Common myeloid progenitor, CD34-positive (primary cell): ENCODE measurements at regions of chr16 and their contacts with region 1.

Region 1: GRCh38 chr16:81696961-81697615 is 82.0 kb upstream of the PLCG2 start:
- DNase-seq: peak; percentile 61 to 73 (median 68)
- H3K4me3 ChIP-seq: no peak overlapping the region
- H3K27ac ChIP-seq: no peak overlapping the region
- H3K4me1 ChIP-seq: peaks cover 0 to 28% (median 10%) of the 10 kb centered on the region in 4 experiments
- H3K27me3 ChIP-seq: no peaks in the 10 kb centered on the region

Region 2: GRCh38 chr16:81632392-81633146 is 64.5 kb before region 1 on chr16:
- CTCF ChIA-PET with region 1: interaction called, 19 read pairs
- POLR2A ChIA-PET with region 1: no interaction called
- DNase-seq: peak; percentile 98 to 99 (median 99)
- H3K4me3 ChIP-seq: peak overlapping the region in 3 of 7 experiments; percentile 12 to 49 (median 29)
- H3K27ac ChIP-seq: peak overlapping the region; percentile 96 to 98
- H3K4me1 ChIP-seq: peaks cover 23 to 74% (median 71%) of the 10 kb centered on the region in 4 experiments
- H3K27me3 ChIP-seq: no peaks in the 10 kb centered on the region

Region 3: DNA sequence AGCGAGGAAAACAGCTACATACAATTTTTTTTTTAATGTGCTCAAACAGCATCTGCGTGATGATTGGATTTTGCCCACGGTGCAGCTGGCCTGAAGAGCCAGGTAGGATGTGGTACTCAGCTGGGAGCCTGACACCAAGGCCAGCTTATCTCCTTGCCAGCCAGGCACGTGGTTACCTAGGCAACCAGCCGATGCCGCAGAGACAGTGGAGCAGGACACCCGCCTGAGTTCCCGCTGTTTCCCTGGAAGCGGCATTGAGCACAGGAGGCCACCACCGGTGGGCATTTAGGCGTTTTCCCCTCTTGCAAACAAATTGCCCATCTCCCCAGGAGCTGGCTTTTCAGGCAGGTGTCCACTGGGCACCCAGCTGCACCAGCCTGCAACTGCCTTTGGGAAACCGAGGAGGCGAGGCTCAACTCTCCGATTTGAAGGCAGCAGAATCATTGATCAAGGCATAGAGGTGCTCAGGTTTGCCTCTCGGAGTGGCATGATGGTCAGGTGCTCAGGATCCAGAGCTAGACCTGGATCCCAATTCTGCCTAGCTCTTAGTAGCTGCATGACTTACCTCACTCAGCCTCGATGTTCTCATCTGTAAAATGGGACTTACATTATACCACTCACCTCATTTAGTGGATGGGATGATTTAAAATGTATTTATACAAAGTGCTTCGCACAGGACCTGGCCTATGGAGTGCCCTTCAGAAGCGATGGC is 55.5 kb before region 1 on chr16:
- CTCF ChIA-PET with region 1: interaction called, 13 read pairs
- POLR2A ChIA-PET with region 1: no interaction called
- DNase-seq: peak in 1 of 3 donors; percentile 25
- H3K4me3 ChIP-seq: no peak overlapping the region
- H3K27ac ChIP-seq: no peak overlapping the region
- H3K4me1 ChIP-seq: peaks cover 0 to 23% (median 19%) of the 10 kb centered on the region in 4 experiments
- H3K27me3 ChIP-seq: no peaks in the 10 kb centered on the region

Region 4: GRCh38 chr16:81686391-81687130 is 10.5 kb before region 1 on chr16:
- CTCF ChIA-PET with region 1: interaction called, 29 read pairs
- POLR2A ChIA-PET with region 1: interaction called, 5 read pairs
- DNase-seq: peak; percentile 92 to 96 (median 94)
- H3K4me3 ChIP-seq: peak overlapping the region in 3 of 7 experiments; percentile 2 to 41 (median 4)
- H3K27ac ChIP-seq: peak overlapping the region; percentile 74 to 84
- H3K4me1 ChIP-seq: peaks cover 0 to 37% (median 22%) of the 10 kb centered on the region in 4 experiments
- H3K27me3 ChIP-seq: no peaks in the 10 kb centered on the region

Region 5: GRCh38 chr16:81711657-81712319 is 14.7 kb after region 1 on chr16:
- CTCF ChIA-PET with region 1: interaction called, 15 read pairs
- POLR2A ChIA-PET with region 1: no interaction called
- DNase-seq: peak in 2 of 3 donors; percentile 73 to 79
- H3K4me3 ChIP-seq: no peak overlapping the region
- H3K27ac ChIP-seq: no peak overlapping the region
- H3K4me1 ChIP-seq: peaks cover 0 to 18% (median 7%) of the 10 kb centered on the region in 4 experiments
- H3K27me3 ChIP-seq: no peaks in the 10 kb centered on the region

Region 6: DNA sequence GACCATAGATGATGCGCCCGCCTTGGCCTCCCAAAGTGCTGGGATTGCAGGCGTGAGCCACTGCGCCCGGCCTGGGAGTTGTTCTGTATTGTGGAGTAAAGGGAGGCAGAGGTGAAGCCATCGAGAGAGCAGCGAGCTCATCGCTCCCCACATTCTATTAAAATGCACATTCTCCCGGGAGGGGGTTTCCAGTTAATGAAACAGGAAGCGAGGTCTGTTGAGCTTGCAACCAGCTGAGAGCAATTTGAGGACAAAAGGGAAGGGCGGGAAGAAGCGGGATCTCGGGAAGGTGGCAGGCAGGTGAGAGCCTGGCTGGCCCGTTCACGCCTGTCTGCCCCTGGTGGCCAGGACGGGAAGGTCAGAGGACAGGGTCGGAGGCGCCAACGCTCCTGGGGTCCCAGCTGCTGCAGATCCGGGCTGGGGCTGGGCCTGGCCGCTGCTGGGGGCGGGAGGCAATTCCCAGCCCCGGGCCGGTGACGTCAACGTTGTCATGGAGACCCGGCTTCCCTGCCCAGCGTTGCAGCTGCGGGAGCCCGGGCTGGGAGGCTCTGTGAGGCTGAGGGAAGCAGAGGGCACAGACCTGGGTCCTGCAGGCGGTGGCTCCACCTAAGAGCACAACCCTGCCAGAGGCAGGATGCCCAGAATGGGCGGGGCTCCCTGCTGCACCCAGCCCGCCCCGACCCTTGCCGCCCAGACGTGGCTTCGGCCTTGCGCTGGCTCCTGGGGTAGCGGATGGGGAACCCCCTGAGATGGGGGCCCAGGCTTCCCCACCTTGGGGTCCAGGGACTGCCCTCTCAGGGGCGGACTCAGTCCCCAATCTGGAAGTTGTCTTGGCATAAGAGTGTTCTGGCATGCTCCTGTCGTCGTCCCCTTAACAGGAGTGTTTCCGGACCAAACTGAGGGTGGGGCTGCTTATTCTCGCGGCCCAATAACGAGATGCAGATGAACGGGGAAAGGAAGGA is 33.3 kb after region 1 on chr16:
- CTCF ChIA-PET with region 1: interaction called, 10 read pairs
- POLR2A ChIA-PET with region 1: no interaction called
- DNase-seq: peak; percentile 55 to 76 (median 75)
- H3K4me3 ChIP-seq: peak overlapping the region in 6 of 7 experiments; percentile 29 to 73 (median 52)
- H3K27ac ChIP-seq: no peak overlapping the region
- H3K4me1 ChIP-seq: peaks cover 0 to 12% (median 10%) of the 10 kb centered on the region in 4 experiments
- H3K27me3 ChIP-seq: no peaks in the 10 kb centered on the region